HEK293 (cell line): ENCODE measurements at regions of chr12 and their contacts with region 1.

Region 1: DNA sequence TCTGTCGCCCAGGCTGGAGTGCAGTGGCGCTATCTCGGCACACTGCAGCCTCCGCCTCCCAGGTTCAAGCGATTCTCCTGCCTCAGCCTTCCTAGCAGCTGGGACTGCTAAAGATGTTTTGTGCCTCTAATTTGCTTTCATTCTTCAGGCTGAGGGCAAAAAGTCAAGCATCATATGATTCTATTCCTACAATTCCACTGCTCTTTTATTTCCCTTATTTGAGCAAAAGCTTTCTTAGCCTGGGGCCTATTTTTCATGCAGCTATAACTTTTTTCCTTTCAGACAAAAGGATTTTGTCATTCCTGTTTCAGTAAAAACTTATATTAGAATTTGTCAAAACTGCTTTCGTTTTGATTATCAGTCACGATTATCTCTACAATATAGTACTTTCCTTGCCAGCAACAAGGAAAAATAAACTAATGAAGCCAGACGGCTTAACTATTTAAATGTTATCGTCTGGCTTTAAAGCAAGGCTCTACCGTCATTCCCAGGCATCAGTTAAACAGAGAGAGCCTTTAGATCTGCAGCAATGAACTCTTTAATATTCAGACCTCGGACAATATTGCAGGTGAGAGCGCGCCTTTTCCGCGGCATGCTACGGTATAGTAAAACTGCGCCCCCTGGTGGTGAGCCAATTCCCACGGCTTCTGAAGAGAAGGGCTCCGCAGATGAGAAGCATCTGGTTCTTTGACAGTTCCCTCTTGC is 1.4 kb upstream of the SLC2A13 start:
- H3K4me3 ChIP-seq: no peak overlapping the region
- H3K27ac ChIP-seq: no peak overlapping the region
- H3K4me1 ChIP-seq: peaks cover 7% of the 10 kb centered on the region; the same call in 1 of the 2 replicates
- CTCF ChIP-seq: peak; percentile 63

Region 2: DNA sequence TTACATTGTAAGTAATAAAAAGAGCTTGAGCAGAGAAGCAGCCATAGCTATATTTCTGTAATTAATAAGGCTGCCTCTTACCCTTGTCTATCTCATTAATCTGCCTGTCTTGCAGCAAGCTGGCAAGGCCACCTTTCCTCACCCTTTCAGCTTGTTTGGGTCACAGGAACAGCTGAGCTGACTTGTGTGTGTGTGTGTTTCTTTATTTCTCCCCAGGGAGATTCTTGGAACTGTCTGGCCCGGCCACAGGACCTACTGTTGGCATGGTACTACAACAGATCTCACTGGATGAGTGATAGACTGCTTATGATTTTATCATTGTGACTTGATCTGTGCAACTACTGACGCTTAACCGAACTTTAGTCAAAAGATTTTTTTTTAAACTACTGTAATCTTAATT is 215.1 kb before region 1 on chr12:
- CTCF ChIA-PET with region 1: no interaction called
- POLR2A ChIA-PET with region 1: no interaction called
- H3K4me3 ChIP-seq: no peak overlapping the region
- H3K27ac ChIP-seq: no peak overlapping the region
- H3K4me1 ChIP-seq: no peaks in the 10 kb centered on the region
- CTCF ChIP-seq: no peak

Region 3: GRCh38 chr12:40010899-40011774 is 96.1 kb before region 1 on chr12:
- CTCF ChIA-PET with region 1: interaction called, 43 read pairs
- POLR2A ChIA-PET with region 1: interaction called, 4 read pairs
- H3K4me3 ChIP-seq: no peak overlapping the region
- H3K27ac ChIP-seq: no peak overlapping the region
- H3K4me1 ChIP-seq: no peaks in the 10 kb centered on the region
- CTCF ChIP-seq: peak; percentile 22; the same call in 1 of the 2 replicates

Region 4: GRCh38 chr12:40117818-40118217 is 10.6 kb after region 1 on chr12:
- CTCF ChIA-PET with region 1: interaction called, 18 read pairs
- POLR2A ChIA-PET with region 1: no interaction called
- H3K4me3 ChIP-seq: no peak overlapping the region
- H3K27ac ChIP-seq: no peak overlapping the region
- H3K4me1 ChIP-seq: no peaks in the 10 kb centered on the region
- CTCF ChIP-seq: no peak

Region 5: GRCh38 chr12:40711121-40711520 is 603.9 kb after region 1 on chr12:
- CTCF ChIA-PET with region 1: no interaction called
- POLR2A ChIA-PET with region 1: no interaction called
- H3K4me3 ChIP-seq: no peak overlapping the region
- H3K27ac ChIP-seq: no peak overlapping the region
- H3K4me1 ChIP-seq: no peaks in the 10 kb centered on the region
- CTCF ChIP-seq: no peak